AG04449 (cell line): ENCODE measurements at regions of chr12 and their contacts with region 1.

Region 1: DNA sequence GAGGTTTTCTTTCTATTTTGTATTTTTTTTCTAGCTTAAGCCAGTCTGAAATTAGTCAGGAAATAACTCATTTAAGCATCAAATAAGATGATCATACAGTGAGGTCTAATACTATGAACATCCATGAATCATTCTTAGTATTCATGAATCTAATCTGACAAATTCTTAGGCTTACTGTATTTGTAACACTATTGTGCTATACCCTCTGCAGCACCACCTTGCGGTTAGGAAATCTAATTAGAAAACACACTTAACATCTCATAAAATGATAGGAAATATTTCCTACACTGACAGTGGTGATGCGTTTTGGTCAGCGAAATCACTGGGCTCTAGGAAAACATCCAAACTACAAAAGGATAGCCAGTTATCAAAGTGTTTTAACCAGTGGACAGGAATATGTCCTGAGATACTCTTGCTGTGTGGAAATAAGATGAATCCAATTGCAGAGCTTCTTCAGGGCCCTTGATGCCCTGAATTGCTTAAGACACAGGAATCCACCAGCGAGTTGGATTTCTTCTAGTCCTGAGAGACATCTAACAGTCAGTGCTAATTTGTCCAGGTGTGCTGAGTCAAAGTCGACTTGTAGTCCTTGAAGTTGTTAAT is 109.3 kb upstream of the MYF6 start:
- DNase-seq: peak; percentile 33
- H3K4me3 ChIP-seq: no peak overlapping the region
- CTCF ChIP-seq: peak; percentile 24

Region 2: GRCh38 chr12:80157645-80158044 is 440.5 kb before region 1 on chr12:
- CTCF ChIA-PET with region 1: no interaction called
- POLR2A ChIA-PET with region 1: no interaction called
- DNase-seq: no peak
- H3K4me3 ChIP-seq: no peak overlapping the region
- CTCF ChIP-seq: no peak

Region 3: DNA sequence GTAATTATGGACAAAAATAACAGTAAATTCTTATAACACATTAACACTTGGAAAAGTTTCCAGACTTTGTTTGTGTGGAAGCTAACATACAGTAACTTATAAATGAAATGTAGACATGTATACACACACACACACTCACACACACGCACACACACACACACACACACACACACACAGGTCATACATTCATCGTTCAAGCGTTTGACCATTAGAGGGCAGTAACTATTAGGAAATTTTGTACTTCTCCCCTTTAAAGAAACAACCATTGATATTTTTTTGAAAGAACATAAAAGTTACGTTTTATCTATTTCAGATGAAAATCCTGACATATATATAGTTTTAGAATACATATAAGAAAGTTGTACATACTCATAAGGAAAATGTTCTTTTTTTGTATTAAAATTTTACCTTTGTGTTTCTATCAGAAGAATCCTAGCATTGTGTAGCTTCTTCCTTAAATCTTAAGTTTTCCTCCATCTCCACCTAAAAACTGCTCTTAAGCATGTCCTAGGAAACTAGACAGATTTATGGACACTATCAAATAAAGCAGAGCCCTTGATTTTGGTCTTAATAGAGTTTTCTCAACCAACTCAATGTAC is 125.1 kb before region 1 on chr12:
- CTCF ChIA-PET with region 1: interaction called, 11 read pairs
- POLR2A ChIA-PET with region 1: no interaction called
- DNase-seq: peak; percentile 40
- H3K4me3 ChIP-seq: no peak overlapping the region
- CTCF ChIP-seq: peak; percentile 35

Region 4: GRCh38 chr12:80582431-80582830 is 15.7 kb before region 1 on chr12:
- CTCF ChIA-PET with region 1: interaction called, 18 read pairs
- POLR2A ChIA-PET with region 1: no interaction called
- DNase-seq: no peak
- H3K4me3 ChIP-seq: no peak overlapping the region
- CTCF ChIP-seq: no peak

Region 5: DNA sequence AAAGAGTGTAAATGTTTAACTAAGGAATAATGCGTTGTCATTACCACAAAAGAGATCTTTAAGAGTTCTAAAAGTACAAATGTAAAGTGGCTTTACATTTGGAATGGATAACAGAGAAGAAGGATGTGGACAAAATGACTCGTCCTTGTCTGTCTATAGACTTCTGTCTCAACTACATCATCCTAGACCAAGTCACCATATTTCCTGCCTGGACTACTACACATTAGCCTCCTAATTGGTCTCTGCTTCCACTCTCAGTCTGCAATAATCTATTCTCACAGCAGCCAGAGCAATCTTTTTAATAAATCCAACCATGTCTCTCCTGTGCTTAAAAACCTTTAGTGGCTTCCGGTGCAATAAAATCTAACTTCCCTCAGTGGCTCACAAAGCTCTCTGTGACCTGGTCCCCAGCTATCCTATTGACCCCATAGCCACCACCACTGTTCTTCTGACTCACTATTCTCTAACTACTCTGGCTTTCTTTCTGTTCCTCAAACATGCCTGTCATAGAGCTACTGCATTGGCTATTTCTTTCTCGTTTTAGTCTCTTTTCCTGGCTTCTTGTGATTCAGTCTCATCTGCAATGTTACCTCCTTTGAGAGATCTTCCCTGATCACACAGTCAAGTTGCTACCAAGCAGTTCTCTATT is 209.7 kb after region 1 on chr12:
- CTCF ChIA-PET with region 1: no interaction called
- POLR2A ChIA-PET with region 1: no interaction called
- DNase-seq: no peak
- H3K4me3 ChIP-seq: no peak overlapping the region
- CTCF ChIP-seq: no peak